CD8-positive, alpha-beta T cell (primary cell): ENCODE measurements at regions of chr1 and their contacts with region 1.

Region 1: DNA sequence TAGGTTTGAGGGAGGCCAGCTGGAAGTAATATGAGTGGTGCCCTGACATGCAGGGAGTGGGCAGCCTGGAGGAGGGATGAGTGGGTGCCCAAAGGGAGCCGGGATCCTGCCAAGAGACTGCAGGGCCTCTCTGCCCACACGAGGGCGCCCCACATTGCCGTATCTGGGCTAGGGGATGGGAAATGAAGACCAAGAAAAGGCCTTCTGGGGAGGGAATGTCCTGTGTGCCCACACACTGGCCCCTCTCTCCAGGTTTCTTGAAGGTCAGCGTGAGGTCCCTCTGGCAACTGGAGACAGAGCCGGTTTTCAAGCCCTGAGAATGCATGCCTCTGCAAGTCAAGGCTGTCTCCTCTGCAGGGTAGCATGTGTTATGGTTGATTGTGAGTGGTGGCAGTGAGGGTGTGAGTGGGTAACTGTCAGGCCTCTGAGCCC is 94.1 kb upstream of the PPM1J start:
- DNase-seq: peak; percentile 23 to 73 (median 54)
- ATAC-seq: peak; percentile 63
- H3K4me3 ChIP-seq: no peak overlapping the region
- H3K4me3 Mint-ChIP-seq: no peak overlapping the region
- H3K27ac ChIP-seq: no peak overlapping the region
- H3K27ac Mint-ChIP-seq: no peak overlapping the region
- H3K4me1 ChIP-seq: no peaks in the 10 kb centered on the region
- H3K4me1 Mint-ChIP-seq: no peaks in the 10 kb centered on the region
- H3K27me3 ChIP-seq: no peaks in the 10 kb centered on the region
- H3K27me3 Mint-ChIP-seq: peaks cover 6% of the 10 kb centered on the region
- CTCF ChIP-seq: peak; percentile 62

Region 2: GRCh38 chr1:112660072-112660471 is 149.2 kb before region 1 on chr1:
- CTCF ChIA-PET with region 1: no interaction called
- POLR2A ChIA-PET with region 1: no interaction called
- intact Hi-C with region 1: no loop called
- DNase-seq: no peak
- ATAC-seq: no peak
- H3K4me3 ChIP-seq: no peak overlapping the region
- H3K4me3 Mint-ChIP-seq: no peak overlapping the region
- H3K27ac ChIP-seq: no peak overlapping the region
- H3K27ac Mint-ChIP-seq: no peak overlapping the region
- H3K4me1 ChIP-seq: no peaks in the 10 kb centered on the region
- H3K4me1 Mint-ChIP-seq: peaks cover 6% of the 10 kb centered on the region
- H3K27me3 ChIP-seq: no peaks in the 10 kb centered on the region
- H3K27me3 Mint-ChIP-seq: no peaks in the 10 kb centered on the region
- CTCF ChIP-seq: no peak

Region 3: GRCh38 chr1:112798292-112798691 is 11.0 kb before region 1 on chr1:
- CTCF ChIA-PET with region 1: interaction called, 11 read pairs
- POLR2A ChIA-PET with region 1: interaction called, 3 read pairs
- intact Hi-C with region 1: no loop called
- DNase-seq: no peak
- ATAC-seq: no peak
- H3K4me3 ChIP-seq: no peak overlapping the region
- H3K4me3 Mint-ChIP-seq: no peak overlapping the region
- H3K27ac ChIP-seq: no peak overlapping the region
- H3K27ac Mint-ChIP-seq: no peak overlapping the region
- H3K4me1 ChIP-seq: no peaks in the 10 kb centered on the region
- H3K4me1 Mint-ChIP-seq: no peaks in the 10 kb centered on the region
- H3K27me3 ChIP-seq: no peaks in the 10 kb centered on the region
- H3K27me3 Mint-ChIP-seq: no peaks in the 10 kb centered on the region
- CTCF ChIP-seq: no peak